Activated CD4-positive, alpha-beta T cell treated with anti-CD3 and anti-CD28 coated beads, Interleukin-2, amount 10 ng/mL, durations not matched to agents 7 days and 5 days (primary cell): ENCODE measurements at regions of chr1 and their contacts with region 1.

Region 1: DNA sequence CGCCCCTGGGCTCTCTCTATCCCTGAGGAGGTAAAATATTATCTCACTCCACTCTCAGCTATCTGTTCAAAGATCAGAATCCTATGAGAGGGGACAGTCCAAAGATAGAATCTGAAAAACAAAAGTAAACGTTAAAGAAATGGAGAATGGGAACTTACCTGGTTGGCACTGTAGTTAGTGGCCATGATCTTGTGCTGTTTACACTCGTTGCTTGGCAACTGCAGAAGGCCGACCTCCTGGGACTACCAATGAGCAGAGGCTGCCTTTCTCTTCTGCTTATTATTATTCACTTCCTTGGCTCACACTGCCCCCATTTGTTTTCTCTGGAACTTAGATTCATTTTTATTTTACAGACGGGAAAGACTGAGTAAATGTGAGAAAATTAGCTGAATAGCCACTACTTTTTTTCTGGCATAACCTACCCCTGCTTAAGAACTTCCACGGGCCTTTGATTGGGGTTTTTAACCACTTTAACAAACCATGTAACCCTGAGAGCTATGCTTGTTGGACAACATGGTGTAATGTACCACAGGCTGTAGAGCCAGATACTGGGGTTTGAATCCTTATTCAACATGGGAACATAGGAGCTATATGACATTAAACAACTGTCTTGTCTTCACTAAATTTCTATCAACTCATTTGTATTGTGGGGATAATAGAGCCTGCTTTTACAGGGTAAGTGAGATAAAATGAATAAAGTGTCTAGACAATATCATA is at the start of gene CFAP126:
- DNase-seq: peak; percentile 57
- H3K4me3 Mint-ChIP-seq: no peak within 1 kb of the TSS
- H3K27ac Mint-ChIP-seq: peak within 1 kb of the TSS; percentile 10
- H3K4me1 Mint-ChIP-seq: peaks cover 14% of the 10 kb centered on the region
- H3K27me3 Mint-ChIP-seq: no peaks in the 10 kb centered on the region
- total RNA-seq, gene CFAP126: not detected

Region 2: DNA sequence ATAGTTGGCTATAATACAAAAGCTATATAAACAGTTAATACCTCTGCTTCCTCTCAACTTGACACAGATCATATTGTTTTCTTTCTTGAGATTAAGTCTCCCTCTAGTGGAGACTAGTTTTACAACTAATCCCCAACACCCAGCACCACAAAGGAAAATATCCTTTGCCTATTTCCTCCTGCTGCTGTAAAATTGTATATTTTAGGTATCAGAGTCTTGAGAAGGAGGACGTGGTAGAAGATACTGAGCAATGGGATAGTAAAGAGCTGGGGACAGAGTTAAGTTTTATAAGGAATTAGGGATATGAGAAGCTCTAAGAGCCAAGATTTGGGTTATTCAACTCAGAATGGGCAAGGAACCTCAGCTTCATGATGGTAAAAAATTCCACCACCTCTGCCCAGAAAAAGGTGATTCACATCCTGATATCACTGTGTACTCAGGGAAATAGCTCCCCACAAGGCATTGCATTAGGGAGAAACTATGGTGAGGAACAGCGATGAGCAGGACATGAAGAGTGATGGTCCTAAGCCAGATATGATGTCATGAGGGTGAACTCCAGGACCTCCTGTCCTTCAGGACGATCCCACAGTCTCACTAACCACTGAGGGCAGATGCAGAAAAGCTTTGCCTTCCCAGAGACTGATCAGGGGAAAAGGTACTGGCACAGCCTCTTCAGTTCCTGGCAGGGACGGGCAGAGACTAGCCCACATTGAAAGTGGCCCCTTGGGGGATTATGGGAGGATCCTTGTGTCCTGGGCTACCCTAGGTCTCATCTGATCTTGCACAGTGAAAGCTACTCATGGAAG is 14.6 kb after region 1 on chr1:
- CTCF ChIA-PET with region 1: interaction called, 20 read pairs
- POLR2A ChIA-PET with region 1: no interaction called
- DNase-seq: no peak
- H3K4me3 Mint-ChIP-seq: no peak overlapping the region
- H3K27ac Mint-ChIP-seq: no peak overlapping the region
- H3K4me1 Mint-ChIP-seq: peaks cover 27% of the 10 kb centered on the region
- H3K27me3 Mint-ChIP-seq: no peaks in the 10 kb centered on the region

Region 3: DNA sequence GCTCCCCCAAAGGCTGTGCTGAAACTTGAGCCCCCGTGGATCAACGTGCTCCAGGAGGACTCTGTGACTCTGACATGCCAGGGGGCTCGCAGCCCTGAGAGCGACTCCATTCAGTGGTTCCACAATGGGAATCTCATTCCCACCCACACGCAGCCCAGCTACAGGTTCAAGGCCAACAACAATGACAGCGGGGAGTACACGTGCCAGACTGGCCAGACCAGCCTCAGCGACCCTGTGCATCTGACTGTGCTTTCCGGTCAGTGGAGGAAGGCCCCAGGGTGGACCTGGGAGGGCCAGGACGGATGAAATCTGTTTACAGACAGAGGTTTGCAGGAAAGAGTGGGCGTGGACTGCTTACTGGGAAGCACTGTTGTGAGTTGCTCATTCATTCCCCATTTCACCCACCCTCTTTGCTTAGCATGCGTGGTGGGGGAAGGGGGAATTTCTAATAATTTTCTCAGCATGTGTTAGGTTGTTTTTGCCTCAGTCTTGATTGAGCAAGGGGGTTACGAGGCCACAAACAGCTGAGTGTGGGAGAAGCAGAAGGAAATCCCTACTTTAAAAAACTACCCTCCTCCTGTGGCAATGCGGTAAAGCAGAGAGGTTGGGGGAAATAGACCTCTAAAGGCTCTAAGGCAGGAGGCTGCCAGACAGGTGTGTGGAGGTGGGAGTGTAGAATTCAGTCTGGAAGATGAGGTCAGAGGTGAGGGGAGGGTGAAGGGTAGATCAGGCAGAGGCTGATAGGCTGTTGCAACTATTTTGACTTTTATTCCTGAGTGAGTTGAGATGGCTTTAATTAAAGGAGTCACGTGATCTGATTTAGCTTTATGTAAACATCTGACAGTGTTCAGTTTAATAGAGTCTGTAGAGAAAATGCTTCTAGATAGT is 138.7 kb after region 1 on chr1:
- CTCF ChIA-PET with region 1: no interaction called
- POLR2A ChIA-PET with region 1: no interaction called
- DNase-seq: no peak
- H3K4me3 Mint-ChIP-seq: no peak overlapping the region
- H3K27ac Mint-ChIP-seq: no peak overlapping the region
- H3K4me1 Mint-ChIP-seq: peaks cover 2% of the 10 kb centered on the region
- H3K27me3 Mint-ChIP-seq: peaks cover 29% of the 10 kb centered on the region

Region 4: DNA sequence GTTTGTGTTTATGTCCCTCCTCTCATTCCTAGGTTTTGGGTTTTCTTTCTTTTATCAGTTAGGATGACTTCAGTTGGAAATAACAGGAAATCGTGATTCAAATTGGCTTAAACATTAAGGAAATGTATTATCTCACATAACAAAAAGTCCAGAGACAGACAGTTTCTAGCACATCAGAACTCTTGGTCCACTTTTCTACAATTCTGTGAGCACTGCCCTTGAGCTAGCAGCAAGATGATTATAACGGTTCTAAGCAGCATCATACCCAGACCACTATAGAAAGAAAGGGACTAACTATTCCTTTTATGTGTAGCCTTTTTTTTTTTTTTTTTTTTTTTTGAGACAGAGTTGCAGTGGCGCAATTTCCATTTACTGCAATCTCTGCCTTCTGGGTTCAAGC is 314.0 kb after region 1 on chr1:
- CTCF ChIA-PET with region 1: no interaction called
- POLR2A ChIA-PET with region 1: no interaction called
- DNase-seq: no peak
- H3K4me3 Mint-ChIP-seq: no peak overlapping the region
- H3K27ac Mint-ChIP-seq: no peak overlapping the region
- H3K4me1 Mint-ChIP-seq: no peaks in the 10 kb centered on the region
- H3K27me3 Mint-ChIP-seq: peaks cover 33% of the 10 kb centered on the region